GM12878 (cell line): ENCODE measurements at regions of chr5 and their contacts with region 1.

Region 1: GRCh38 chr5:154467655-154468354 is 10.2 kb downstream of the HAND1 start:
- DNase-seq: peak; percentile 42
- ATAC-seq: peak; percentile 99
- H3K4me3 ChIP-seq: no peak overlapping the region
- H3K27ac ChIP-seq: no peak overlapping the region
- H3K4me1 ChIP-seq: peaks cover 12% of the 10 kb centered on the region
- H3K27me3 ChIP-seq: peaks cover 0 to 3% of the 10 kb centered on the region in 2 experiments; a peak in 1 of 4 replicates
- CTCF ChIP-seq: peak; percentile 89 to 96 (median 92)
- EP300 ChIP-seq: no peak
- POLR2A ChIP-seq: no peak
- RAD21 ChIP-seq: peak; percentile 98

Region 2: DNA sequence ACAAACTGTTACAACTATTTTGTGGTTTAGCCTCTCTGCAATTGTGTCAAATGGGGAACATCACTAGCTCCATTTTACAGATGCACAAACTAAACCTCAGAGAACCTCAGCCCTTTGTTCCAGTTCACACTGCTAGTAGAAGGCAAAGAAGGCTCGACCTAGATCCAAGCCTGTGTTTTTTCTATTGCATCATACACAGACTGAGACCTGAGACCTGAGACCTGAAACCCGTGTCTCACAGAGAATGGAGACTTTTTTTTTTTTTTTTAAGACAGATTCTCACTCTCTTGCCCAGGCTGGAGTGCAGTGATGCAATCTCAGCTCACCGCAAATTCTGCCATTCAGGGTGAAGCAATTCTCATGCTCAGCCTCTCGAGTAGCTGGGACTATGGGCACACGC is 156.4 kb before region 1 on chr5:
- CTCF ChIA-PET with region 1: no interaction called
- POLR2A ChIA-PET with region 1: no interaction called
- RAD21 ChIA-PET with region 1: no interaction called
- SMC1A ChIA-PET with region 1: no interaction called
- in situ Hi-C with region 1: no loop called
- intact Hi-C with region 1: no loop called
- DNase-seq: peak; percentile 25
- ATAC-seq: peak; percentile 88
- H3K4me3 ChIP-seq: no peak overlapping the region
- H3K27ac ChIP-seq: no peak overlapping the region
- H3K4me1 ChIP-seq: peaks cover 8% of the 10 kb centered on the region; the same call in 1 of the 2 replicates
- H3K27me3 ChIP-seq: no peaks in the 10 kb centered on the region
- CTCF ChIP-seq: no peak
- EP300 ChIP-seq: no peak
- POLR2A ChIP-seq: no peak
- RAD21 ChIP-seq: no peak

Region 3: GRCh38 chr5:154421868-154422267 is 45.9 kb before region 1 on chr5:
- CTCF ChIA-PET with region 1: interaction called, 24 read pairs
- POLR2A ChIA-PET with region 1: no interaction called
- RAD21 ChIA-PET with region 1: interaction called, 11 read pairs
- SMC1A ChIA-PET with region 1: interaction called, 6 read pairs
- in situ Hi-C with region 1: no loop called
- intact Hi-C with region 1: no loop called
- DNase-seq: no peak
- ATAC-seq: peak; percentile 86
- H3K4me3 ChIP-seq: no peak overlapping the region
- H3K27ac ChIP-seq: no peak overlapping the region
- H3K4me1 ChIP-seq: peaks cover 2% of the 10 kb centered on the region; the same call in 1 of the 2 replicates
- H3K27me3 ChIP-seq: no peaks in the 10 kb centered on the region
- CTCF ChIP-seq: peak; percentile 53 to 64 (median 56)
- EP300 ChIP-seq: no peak
- POLR2A ChIP-seq: no peak
- RAD21 ChIP-seq: peak; percentile 56

Region 4: DNA sequence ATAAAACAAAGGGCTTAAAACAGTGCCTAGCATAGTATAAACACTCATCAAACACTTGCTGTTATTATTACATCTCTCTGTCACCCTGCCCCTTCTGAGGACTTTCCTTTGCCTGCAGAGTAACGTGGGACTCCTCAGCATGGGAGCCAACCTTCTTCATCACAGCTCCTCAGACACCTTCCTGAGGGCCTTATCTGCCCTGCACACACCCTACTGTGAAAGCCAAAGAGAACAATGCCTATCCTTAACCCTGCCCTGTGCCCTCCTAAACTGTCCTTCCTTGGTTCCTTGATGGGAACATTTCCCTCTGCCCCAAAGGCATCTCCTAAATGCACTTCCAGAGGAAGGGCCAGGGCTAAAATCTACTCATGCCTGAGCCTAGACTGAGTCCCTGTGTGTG is 30.8 kb after region 1 on chr5:
- CTCF ChIA-PET with region 1: interaction called, 24 read pairs
- POLR2A ChIA-PET with region 1: no interaction called
- RAD21 ChIA-PET with region 1: interaction called, 19 read pairs
- SMC1A ChIA-PET with region 1: interaction called, 13 read pairs
- in situ Hi-C with region 1: no loop called
- intact Hi-C with region 1: no loop called
- DNase-seq: no peak
- ATAC-seq: no peak
- H3K4me3 ChIP-seq: no peak overlapping the region
- H3K27ac ChIP-seq: no peak overlapping the region
- H3K4me1 ChIP-seq: peaks cover 29% of the 10 kb centered on the region
- H3K27me3 ChIP-seq: no peaks in the 10 kb centered on the region
- CTCF ChIP-seq: no peak
- EP300 ChIP-seq: no peak
- POLR2A ChIP-seq: no peak
- RAD21 ChIP-seq: no peak

Region 5: GRCh38 chr5:154520861-154521453 is 53.2 kb after region 1 on chr5:
- CTCF ChIA-PET with region 1: interaction called, 53 read pairs
- POLR2A ChIA-PET with region 1: no interaction called
- RAD21 ChIA-PET with region 1: interaction called, 7 read pairs
- SMC1A ChIA-PET with region 1: interaction called, 29 read pairs
- in situ Hi-C with region 1: no loop called
- intact Hi-C with region 1: no loop called
- DNase-seq: no peak
- ATAC-seq: peak; percentile 42
- H3K4me3 ChIP-seq: no peak overlapping the region
- H3K27ac ChIP-seq: no peak overlapping the region
- H3K4me1 ChIP-seq: 0 out of 2 replicates have a peak, but pooled peaks cover 4% of the 10 kb centered on the region
- H3K27me3 ChIP-seq: peaks cover 0 to 2% of the 10 kb centered on the region in 2 experiments; a peak in 1 of 4 replicates
- CTCF ChIP-seq: peak; percentile 64 to 87 (median 74)
- EP300 ChIP-seq: no peak
- POLR2A ChIP-seq: no peak
- RAD21 ChIP-seq: peak; percentile 43

Region 6: GRCh38 chr5:154603978-154604679 is 136.3 kb after region 1 on chr5:
- CTCF ChIA-PET with region 1: interaction called, 121 read pairs
- POLR2A ChIA-PET with region 1: no interaction called
- RAD21 ChIA-PET with region 1: interaction called, 52 read pairs
- SMC1A ChIA-PET with region 1: interaction called, 81 read pairs
- in situ Hi-C with region 1: loop called (anchors 5 kb)
- intact Hi-C with region 1: no loop called
- DNase-seq: no peak
- ATAC-seq: peak; percentile 57
- H3K4me3 ChIP-seq: no peak overlapping the region
- H3K27ac ChIP-seq: no peak overlapping the region
- H3K4me1 ChIP-seq: no peaks in the 10 kb centered on the region
- H3K27me3 ChIP-seq: no peaks in the 10 kb centered on the region; a peak in 2 of 4 replicates
- CTCF ChIP-seq: no peak
- EP300 ChIP-seq: no peak
- POLR2A ChIP-seq: no peak
- RAD21 ChIP-seq: no peak

Region 7: DNA sequence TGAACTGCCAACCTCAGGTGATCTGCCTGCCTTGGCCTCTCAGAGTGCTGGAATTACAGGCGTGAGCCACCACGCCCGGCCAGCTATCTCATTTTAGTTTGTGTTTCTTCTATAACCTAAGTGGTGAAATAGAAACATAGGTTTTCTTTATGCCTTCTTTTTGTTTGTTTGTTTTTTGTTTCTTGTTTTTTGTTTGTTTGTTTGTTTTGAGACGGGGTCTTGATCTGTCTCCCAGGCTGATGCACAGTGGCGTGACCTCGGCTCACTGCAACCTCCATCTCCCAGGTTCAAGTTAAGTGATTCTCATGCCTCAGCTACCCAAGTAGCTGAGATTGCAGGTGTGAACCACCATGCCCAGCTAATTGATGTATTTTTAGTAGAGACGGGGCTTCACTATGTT is 165.3 kb after region 1 on chr5:
- CTCF ChIA-PET with region 1: interaction called, 17 read pairs
- POLR2A ChIA-PET with region 1: no interaction called
- RAD21 ChIA-PET with region 1: interaction called, 6 read pairs
- SMC1A ChIA-PET with region 1: interaction called, 12 read pairs
- in situ Hi-C with region 1: no loop called
- intact Hi-C with region 1: no loop called
- DNase-seq: no peak
- ATAC-seq: no peak
- H3K4me3 ChIP-seq: no peak overlapping the region
- H3K27ac ChIP-seq: no peak overlapping the region
- H3K4me1 ChIP-seq: no peaks in the 10 kb centered on the region
- H3K27me3 ChIP-seq: no peaks in the 10 kb centered on the region
- CTCF ChIP-seq: no peak
- EP300 ChIP-seq: no peak
- POLR2A ChIP-seq: no peak
- RAD21 ChIP-seq: no peak